CD8-positive, alpha-beta T cell (primary cell): ENCODE measurements at regions of chr9 and their contacts with region 1.

Region 1: DNA sequence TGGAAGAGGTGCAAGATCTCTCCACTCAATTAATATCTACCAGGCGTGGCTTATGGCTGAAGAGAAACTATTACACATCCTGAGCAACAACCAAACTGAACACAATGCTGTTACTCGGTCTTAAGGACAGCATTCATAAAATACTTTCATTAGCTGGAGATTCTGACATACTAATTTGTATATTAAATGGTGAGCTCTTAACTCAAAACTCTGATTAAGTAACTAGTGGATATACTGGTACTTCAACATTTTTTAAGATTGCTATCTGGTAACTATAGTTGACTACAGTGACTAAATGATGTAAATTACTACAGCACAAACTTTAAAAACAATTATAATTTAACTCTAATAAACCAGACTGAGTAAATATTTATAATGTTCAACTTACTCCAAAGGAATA is 15.8 kb downstream of the ZDHHC21 start:
- DNase-seq: no peak
- ATAC-seq: no peak
- H3K4me3 ChIP-seq: no peak overlapping the region
- H3K4me3 Mint-ChIP-seq: no peak overlapping the region
- H3K27ac ChIP-seq: no peak overlapping the region
- H3K27ac Mint-ChIP-seq: no peak overlapping the region
- H3K4me1 ChIP-seq: no peaks in the 10 kb centered on the region
- H3K4me1 Mint-ChIP-seq: peaks cover 20% of the 10 kb centered on the region
- H3K27me3 ChIP-seq: no peaks in the 10 kb centered on the region
- H3K27me3 Mint-ChIP-seq: no peaks in the 10 kb centered on the region
- CTCF ChIP-seq: no peak

Region 2: DNA sequence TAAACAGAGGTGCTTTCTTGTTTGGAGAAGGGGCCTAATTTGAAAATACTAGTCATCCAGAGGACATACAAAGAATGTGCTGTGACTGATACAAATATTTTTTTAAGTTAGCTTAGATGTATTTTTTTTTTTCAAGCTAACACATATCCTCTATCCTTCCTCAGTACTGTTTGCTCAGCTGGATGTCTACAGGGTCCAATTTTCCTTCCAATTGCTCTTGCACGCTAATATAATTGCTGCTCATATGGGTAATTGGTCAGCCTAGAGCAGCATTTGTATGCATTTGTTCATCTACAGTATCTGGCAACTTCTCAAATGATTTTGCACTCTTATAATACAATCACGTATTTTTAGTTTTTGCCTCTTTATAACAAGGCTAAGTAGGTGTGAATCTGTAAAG is 68.9 kb before region 1 on chr9:
- CTCF ChIA-PET with region 1: no interaction called
- POLR2A ChIA-PET with region 1: no interaction called
- intact Hi-C with region 1: no loop called
- DNase-seq: no peak
- ATAC-seq: no peak
- H3K4me3 ChIP-seq: no peak overlapping the region
- H3K4me3 Mint-ChIP-seq: no peak overlapping the region
- H3K27ac ChIP-seq: no peak overlapping the region
- H3K27ac Mint-ChIP-seq: no peak overlapping the region
- H3K4me1 ChIP-seq: no peaks in the 10 kb centered on the region
- H3K4me1 Mint-ChIP-seq: no peaks in the 10 kb centered on the region
- H3K27me3 ChIP-seq: no peaks in the 10 kb centered on the region
- H3K27me3 Mint-ChIP-seq: no peaks in the 10 kb centered on the region
- CTCF ChIP-seq: no peak

Region 3: GRCh38 chr9:14661421-14662059 is 15.9 kb before region 1 on chr9:
- CTCF ChIA-PET with region 1: no interaction called
- POLR2A ChIA-PET with region 1: no interaction called
- intact Hi-C with region 1: loop called in 1 of 2 experiments (anchors 2 kb)
- DNase-seq: peak in 1 of 9 experiments; percentile 6
- ATAC-seq: no peak
- H3K4me3 ChIP-seq: no peak overlapping the region
- H3K4me3 Mint-ChIP-seq: no peak overlapping the region
- H3K27ac ChIP-seq: no peak overlapping the region
- H3K27ac Mint-ChIP-seq: no peak overlapping the region
- H3K4me1 ChIP-seq: no peaks in the 10 kb centered on the region
- H3K4me1 Mint-ChIP-seq: peaks cover 3% of the 10 kb centered on the region
- H3K27me3 ChIP-seq: no peaks in the 10 kb centered on the region
- H3K27me3 Mint-ChIP-seq: no peaks in the 10 kb centered on the region
- CTCF ChIP-seq: no peak

Region 4: GRCh38 chr9:14730461-14730898 is 53.1 kb after region 1 on chr9:
- CTCF ChIA-PET with region 1: no interaction called
- POLR2A ChIA-PET with region 1: no interaction called
- intact Hi-C with region 1: no loop called
- DNase-seq: no peak
- ATAC-seq: no peak
- H3K4me3 ChIP-seq: no peak overlapping the region
- H3K4me3 Mint-ChIP-seq: no peak overlapping the region
- H3K27ac ChIP-seq: no peak overlapping the region
- H3K27ac Mint-ChIP-seq: no peak overlapping the region
- H3K4me1 ChIP-seq: no peaks in the 10 kb centered on the region
- H3K4me1 Mint-ChIP-seq: no peaks in the 10 kb centered on the region
- H3K27me3 ChIP-seq: no peaks in the 10 kb centered on the region
- H3K27me3 Mint-ChIP-seq: peaks cover 5% of the 10 kb centered on the region
- CTCF ChIP-seq: no peak